Gastrocnemius medialis (tissue), 4 donors: ENCODE measurements at regions of chr13 and their contacts with region 1.

Region 1: DNA sequence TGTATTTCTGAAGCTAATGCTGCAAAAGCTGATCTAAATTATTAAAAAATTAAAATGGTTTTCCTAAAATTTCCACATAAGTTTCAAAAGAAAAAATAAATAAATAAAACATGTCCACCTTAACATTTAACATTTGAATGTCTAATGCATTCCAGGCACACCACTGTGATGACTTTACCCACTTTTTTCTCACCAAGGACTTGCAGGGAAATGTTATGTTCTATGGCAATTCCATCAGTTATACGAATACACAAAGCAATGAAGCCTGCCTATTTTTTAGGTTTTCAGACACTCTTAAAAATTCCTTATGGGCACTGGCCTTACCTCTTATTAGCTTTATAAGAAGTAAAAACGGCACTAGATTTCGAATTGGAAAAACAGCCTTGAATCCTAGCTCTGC is 10.2 kb downstream of the TSC22D1 start:
- DNase-seq: no peak
- ATAC-seq: no peak
- H3K4me3 ChIP-seq: no peak overlapping the region
- H3K27ac ChIP-seq: peak overlapping the region in 1 of 4 donors; percentile 64
- H3K4me1 ChIP-seq: peaks cover 62 to 66% of the 10 kb centered on the region in 2 donors
- H3K27me3 ChIP-seq: no peaks in the 10 kb centered on the region
- CTCF ChIP-seq: no peak
- POLR2A ChIP-seq: no peak

Region 2: GRCh38 chr13:44498969-44499368 is 66.9 kb before region 1 on chr13:
- in situ Hi-C with region 1: loop called in 1 of 4 experiments (anchors 10 kb)
- intact Hi-C with region 1: no loop called
- DNase-seq: no peak
- ATAC-seq: no peak
- H3K4me3 ChIP-seq: no peak overlapping the region
- H3K27ac ChIP-seq: peak overlapping the region in 1 of 4 donors; percentile 24
- H3K4me1 ChIP-seq: peaks cover 6 to 15% of the 10 kb centered on the region in 2 donors
- H3K27me3 ChIP-seq: no peaks in the 10 kb centered on the region
- CTCF ChIP-seq: no peak
- POLR2A ChIP-seq: no peak